ENCODE measurements at regions of chr5 and their contacts with region 1.

Region 1: DNA sequence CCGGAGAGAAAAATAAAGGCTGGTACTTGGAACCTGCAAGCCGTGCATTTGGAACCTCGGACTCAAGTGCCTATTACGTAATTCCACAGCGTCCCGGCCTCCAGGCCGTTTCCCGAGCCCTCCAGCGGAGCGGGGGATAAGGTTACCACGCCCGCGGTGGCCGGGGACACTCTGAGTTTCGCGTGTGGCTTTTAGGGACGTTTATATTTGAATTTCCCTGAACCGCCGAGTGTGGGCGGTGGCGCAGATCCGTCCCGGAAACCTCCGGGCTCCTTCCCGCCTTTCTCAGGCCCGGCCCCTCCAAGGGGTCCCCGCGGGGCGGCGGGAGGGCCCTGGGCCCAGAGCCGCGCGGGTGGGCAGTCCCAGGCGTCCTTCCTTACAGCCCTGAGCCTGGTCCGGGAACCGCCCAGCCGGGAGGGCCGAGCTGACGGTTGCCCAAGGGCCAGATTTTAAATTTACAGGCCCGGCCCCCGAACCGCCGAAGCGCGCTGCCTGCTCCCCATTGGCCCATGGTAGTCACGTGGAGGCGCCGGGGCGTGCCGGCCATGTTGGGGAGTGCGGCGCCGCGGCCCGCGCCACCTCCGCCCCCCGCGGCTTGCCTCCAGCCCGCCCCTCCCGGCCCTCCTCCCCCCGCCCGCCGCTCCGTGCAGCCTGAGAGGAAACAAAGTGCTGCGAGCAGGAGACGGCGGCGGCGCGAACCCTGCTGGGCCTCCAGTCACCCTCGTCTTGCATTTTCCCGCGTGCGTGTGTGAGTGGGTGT is at the start of gene LMNB1:
- DNase-seq: peak; percentile 96
- H3K4me3 Mint-ChIP-seq: peak within 1 kb of the TSS; percentile 95
- H3K27ac Mint-ChIP-seq: peak within 1 kb of the TSS; percentile 94
- H3K4me1 Mint-ChIP-seq: peaks cover 30% of the 10 kb centered on the region
- H3K27me3 Mint-ChIP-seq: no peaks in the 10 kb centered on the region
- total RNA-seq, gene LMNB1: 291 to 296 TPM

Region 2: GRCh38 chr5:126449751-126450271 is 326.9 kb before region 1 on chr5:
- CTCF ChIA-PET with region 1: no interaction called
- POLR2A ChIA-PET with region 1: interaction called, 22 read pairs
- DNase-seq: peak; percentile 77
- H3K4me3 Mint-ChIP-seq: peak overlapping the region; percentile 75
- H3K27ac Mint-ChIP-seq: peak overlapping the region; percentile 99
- H3K4me1 Mint-ChIP-seq: peaks cover 66% of the 10 kb centered on the region
- H3K27me3 Mint-ChIP-seq: no peaks in the 10 kb centered on the region

Region 3: GRCh38 chr5:126676195-126676624 is 100.5 kb before region 1 on chr5:
- CTCF ChIA-PET with region 1: interaction called, 233 read pairs
- POLR2A ChIA-PET with region 1: interaction called, 207 read pairs
- DNase-seq: peak; percentile 75
- H3K4me3 Mint-ChIP-seq: no peak overlapping the region
- H3K27ac Mint-ChIP-seq: peak overlapping the region; percentile 1
- H3K4me1 Mint-ChIP-seq: peaks cover 18% of the 10 kb centered on the region
- H3K27me3 Mint-ChIP-seq: no peaks in the 10 kb centered on the region

Region 4: DNA sequence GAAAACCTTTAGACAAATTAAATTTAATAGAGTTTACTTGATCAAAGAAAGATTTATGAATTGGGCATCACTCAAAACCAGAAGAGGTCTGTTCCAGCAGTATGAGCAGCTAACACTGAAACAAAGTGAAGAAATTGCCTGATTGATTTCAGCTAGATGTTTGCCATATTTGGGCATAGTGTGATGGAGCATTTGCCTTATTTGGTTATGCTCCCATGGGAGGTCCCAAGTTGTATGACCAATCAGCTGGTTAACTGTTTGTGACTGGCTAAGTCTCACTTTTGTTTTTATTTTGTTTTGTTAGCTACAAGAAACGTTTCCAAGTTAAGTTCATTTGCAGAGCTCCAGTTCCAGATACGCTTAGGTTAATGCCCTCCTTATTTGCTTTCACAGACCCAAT is 53.0 kb before region 1 on chr5:
- CTCF ChIA-PET with region 1: interaction called, 3 read pairs
- POLR2A ChIA-PET with region 1: interaction called, 154 read pairs
- DNase-seq: no peak
- H3K4me3 Mint-ChIP-seq: no peak overlapping the region
- H3K27ac Mint-ChIP-seq: no peak overlapping the region
- H3K4me1 Mint-ChIP-seq: no peaks in the 10 kb centered on the region
- H3K27me3 Mint-ChIP-seq: peaks cover 1% of the 10 kb centered on the region

Region 5: GRCh38 chr5:126754609-126755008 is 22.1 kb before region 1 on chr5:
- CTCF ChIA-PET with region 1: interaction called, 67 read pairs
- POLR2A ChIA-PET with region 1: interaction called, 377 read pairs
- DNase-seq: no peak
- H3K4me3 Mint-ChIP-seq: no peak overlapping the region
- H3K27ac Mint-ChIP-seq: no peak overlapping the region
- H3K4me1 Mint-ChIP-seq: peaks cover 53% of the 10 kb centered on the region
- H3K27me3 Mint-ChIP-seq: no peaks in the 10 kb centered on the region

Region 6: DNA sequence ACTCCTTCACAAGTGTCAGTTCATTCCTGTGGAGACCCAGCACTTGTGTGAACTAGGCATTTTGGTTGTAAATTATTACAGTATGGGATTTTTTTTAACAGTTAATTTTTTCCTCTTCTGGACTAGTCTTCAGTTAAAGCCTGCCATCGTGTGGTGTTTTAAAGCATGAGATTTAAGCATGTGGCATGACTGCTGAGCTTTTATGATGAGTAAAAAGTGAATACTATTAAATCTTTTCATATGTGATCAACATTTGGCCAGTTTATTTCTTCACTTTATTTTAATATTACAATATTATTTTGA is 25.3 kb after region 1 on chr5:
- CTCF ChIA-PET with region 1: interaction called, 39 read pairs
- POLR2A ChIA-PET with region 1: interaction called, 58 read pairs
- DNase-seq: no peak
- H3K4me3 Mint-ChIP-seq: no peak overlapping the region
- H3K27ac Mint-ChIP-seq: no peak overlapping the region
- H3K4me1 Mint-ChIP-seq: peaks cover 45% of the 10 kb centered on the region
- H3K27me3 Mint-ChIP-seq: no peaks in the 10 kb centered on the region

Region 7: GRCh38 chr5:127030259-127031146 is 253.8 kb after region 1 on chr5 and contains the start of gene MARCHF3:
- CTCF ChIA-PET with region 1: interaction called, 3 read pairs
- POLR2A ChIA-PET with region 1: interaction called, 11 read pairs
- DNase-seq: peak; percentile 95
- H3K4me3 Mint-ChIP-seq: peak within 1 kb of the TSS; percentile 85
- H3K27ac Mint-ChIP-seq: no peak within 1 kb of the TSS
- H3K4me1 Mint-ChIP-seq: peaks cover 12% of the 10 kb centered on the region
- H3K27me3 Mint-ChIP-seq: peaks cover 49% of the 10 kb centered on the region
- total RNA-seq, gene MARCHF3: 0.68 to 0.70 TPM